Ovary (tissue), 10 donors: ENCODE measurements at regions of chr6 and their contacts with region 1.

Region 1: DNA sequence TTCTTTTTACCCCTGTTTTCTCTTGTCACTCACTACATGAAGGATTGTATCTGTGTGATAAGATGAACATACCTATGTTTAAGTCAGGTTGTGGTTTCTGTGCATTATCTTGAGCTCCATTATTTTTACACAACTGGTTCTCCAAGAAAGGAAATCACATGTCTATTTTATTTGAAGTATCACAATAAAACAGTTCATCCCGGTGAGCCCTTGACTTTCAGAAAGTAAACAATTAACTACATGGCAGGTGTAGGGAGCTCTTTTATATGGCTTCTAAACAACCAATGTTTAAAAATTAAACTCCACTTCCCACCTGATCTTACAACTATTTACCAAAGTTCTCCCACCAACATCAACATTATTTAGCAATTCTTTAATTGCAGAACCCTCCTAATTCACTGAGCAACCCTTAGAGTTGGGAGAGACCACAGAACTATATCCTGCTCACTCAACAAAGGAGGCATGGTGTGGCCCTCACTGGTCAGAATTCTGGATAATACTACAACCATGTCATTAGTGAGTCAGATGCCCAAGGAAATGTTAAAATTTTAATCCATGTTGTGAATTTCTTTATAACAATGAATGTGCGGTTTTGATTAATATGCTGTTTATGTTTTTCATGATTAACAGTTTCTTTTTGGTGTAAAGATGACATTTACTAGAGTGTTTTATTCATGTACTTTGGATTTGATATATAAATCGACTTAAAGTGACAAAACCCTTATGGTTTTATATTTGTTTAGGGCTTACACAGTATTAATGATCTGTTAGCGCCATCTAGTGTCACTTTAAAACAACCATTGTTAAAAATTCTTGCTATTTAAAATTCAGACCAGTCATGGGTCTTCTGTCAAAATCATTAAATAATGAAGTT is 50.0 kb upstream of the SCGN start:
- DNase-seq: no peak
- H3K4me3 ChIP-seq: no peak overlapping the region
- H3K27ac ChIP-seq: no peak overlapping the region
- H3K4me1 ChIP-seq: no peaks in the 10 kb centered on the region
- H3K27me3 ChIP-seq: no peaks in the 10 kb centered on the region
- CTCF ChIP-seq: peak in 2 of 3 donors; percentile 40 to 57
- EP300 ChIP-seq: no peak
- POLR2A ChIP-seq: no peak

Region 2: GRCh38 chr6:25263657-25264056 is 338.4 kb before region 1 on chr6:
- intact Hi-C with region 1: loop called in 3 of 4 experiments (anchors 10 kb)
- DNase-seq: no peak
- H3K4me3 ChIP-seq: no peak overlapping the region
- H3K27ac ChIP-seq: no peak overlapping the region
- H3K4me1 ChIP-seq: no peaks in the 10 kb centered on the region
- H3K27me3 ChIP-seq: no peaks in the 10 kb centered on the region
- CTCF ChIP-seq: no peak
- EP300 ChIP-seq: no peak
- POLR2A ChIP-seq: no peak